Right cardiac atrium (tissue), 5 donors: ENCODE measurements at regions of chr10 and their contacts with region 1.

Region 1: GRCh38 chr10:123377849-123378248 is 223.6 kb downstream of the BUB3 start:
- DNase-seq: no peak
- ATAC-seq: no peak
- H3K4me3 ChIP-seq: no peak overlapping the region
- H3K27ac ChIP-seq: no peak overlapping the region
- H3K4me1 ChIP-seq: no peaks in the 10 kb centered on the region
- H3K27me3 ChIP-seq: no peaks in the 10 kb centered on the region

Region 2: GRCh38 chr10:123132576-123133477 is 245.0 kb before region 1 on chr10:
- intact Hi-C with region 1: loop called in 1 of 4 experiments (anchors 10 kb)
- DNase-seq: peak; percentile 87 to 93 (median 89)
- ATAC-seq: peak; percentile 80 to 82
- H3K4me3 ChIP-seq: peak overlapping the region; percentile 28
- H3K27ac ChIP-seq: no peak overlapping the region
- H3K4me1 ChIP-seq: peaks cover 6% of the 10 kb centered on the region
- H3K27me3 ChIP-seq: peaks cover 2% of the 10 kb centered on the region

Region 3: DNA sequence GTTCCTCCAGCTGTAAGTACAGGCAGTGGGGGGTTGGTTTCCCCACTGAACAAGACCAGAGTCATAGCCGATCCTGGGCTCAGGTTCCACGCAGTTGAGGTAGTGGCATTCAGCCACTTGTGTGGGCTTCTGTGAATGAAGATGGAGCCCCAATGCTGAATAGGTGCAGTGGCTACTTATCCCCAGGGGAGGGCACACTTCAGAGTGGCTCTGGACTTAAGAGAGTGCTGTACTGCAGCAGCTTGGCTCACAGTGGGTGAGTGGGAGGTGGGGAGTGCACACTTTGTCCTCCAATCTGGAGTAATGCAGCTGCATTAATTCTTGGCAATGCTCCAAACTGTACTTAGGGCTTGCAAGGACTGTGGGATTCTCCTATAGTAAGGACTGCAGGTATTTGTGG is 141.7 kb before region 1 on chr10:
- intact Hi-C with region 1: no loop called
- DNase-seq: no peak
- ATAC-seq: no peak
- H3K4me3 ChIP-seq: no peak overlapping the region
- H3K27ac ChIP-seq: no peak overlapping the region
- H3K4me1 ChIP-seq: no peaks in the 10 kb centered on the region
- H3K27me3 ChIP-seq: no peaks in the 10 kb centered on the region